PC-3 (cell line): ENCODE measurements at regions of chr6 and their contacts with region 1.

Region 1: DNA sequence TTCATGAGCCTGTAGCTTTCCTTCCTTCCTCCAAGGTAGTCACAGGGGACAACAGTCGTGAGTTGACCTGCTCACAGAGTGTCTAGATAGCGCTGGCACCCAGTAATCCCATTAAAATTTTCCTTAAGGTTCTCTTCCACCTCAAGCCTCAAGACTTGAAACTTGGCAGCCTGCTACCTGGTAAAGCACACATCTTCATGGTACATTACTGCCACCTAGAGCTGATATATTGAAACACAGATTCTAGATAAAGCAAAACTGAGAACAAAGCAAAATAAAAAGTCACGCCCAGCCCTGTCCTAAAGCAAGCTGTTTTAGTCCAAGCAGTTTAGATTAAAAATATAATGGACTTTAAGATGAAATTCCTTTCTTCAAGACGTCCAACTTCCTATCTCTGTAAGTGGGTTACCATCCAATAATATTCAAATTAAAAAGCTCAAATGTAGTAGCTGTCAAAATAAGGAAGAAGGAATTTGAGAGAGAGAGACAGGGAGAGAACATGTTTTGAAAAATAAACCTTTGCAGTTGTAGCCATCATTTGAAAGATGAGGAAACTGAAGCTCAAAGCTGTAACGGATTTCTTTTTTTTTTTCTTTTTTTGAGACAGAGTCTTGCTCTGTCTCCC is 50.7 kb upstream of the CD83 start:
- DNase-seq: peak; percentile 89
- ATAC-seq: peak; percentile 62
- H3K4me3 ChIP-seq: no peak overlapping the region
- H3K27ac ChIP-seq: no peak overlapping the region
- H3K4me1 ChIP-seq: peaks cover 24% of the 10 kb centered on the region
- H3K27me3 ChIP-seq: no peaks in the 10 kb centered on the region
- CTCF ChIP-seq: peak; percentile 84

Region 2: GRCh38 chr6:13725570-13725969 is 341.3 kb before region 1 on chr6:
- CTCF ChIA-PET with region 1: no interaction called
- POLR2A ChIA-PET with region 1: interaction called, 3 read pairs
- intact Hi-C with region 1: loop called (anchors 10 kb)
- DNase-seq: peak; percentile 99
- ATAC-seq: peak; percentile 57
- H3K4me3 ChIP-seq: peak overlapping the region; percentile 16; the same call in 1 of the 2 replicates
- H3K27ac ChIP-seq: peak overlapping the region; percentile 90
- H3K4me1 ChIP-seq: peaks cover 71% of the 10 kb centered on the region
- H3K27me3 ChIP-seq: no peaks in the 10 kb centered on the region
- CTCF ChIP-seq: no peak

Region 3: GRCh38 chr6:13814176-13814937 is 252.5 kb before region 1 on chr6 and contains the start of gene MCUR1:
- CTCF ChIA-PET with region 1: no interaction called
- POLR2A ChIA-PET with region 1: no interaction called
- intact Hi-C with region 1: loop called (anchors 5 kb)
- DNase-seq: peak; percentile 89
- ATAC-seq: peak; percentile 76
- H3K4me3 ChIP-seq: peak within 1 kb of the TSS; percentile 86
- H3K27ac ChIP-seq: peak within 1 kb of the TSS; percentile 44
- H3K4me1 ChIP-seq: peaks cover 18% of the 10 kb centered on the region
- H3K27me3 ChIP-seq: no peaks in the 10 kb centered on the region
- CTCF ChIP-seq: peak; percentile 22; the same call in 1 of the 2 replicates
- total RNA-seq, gene MCUR1: 28.6 and 36.2 TPM in 2 replicates

Region 4: DNA sequence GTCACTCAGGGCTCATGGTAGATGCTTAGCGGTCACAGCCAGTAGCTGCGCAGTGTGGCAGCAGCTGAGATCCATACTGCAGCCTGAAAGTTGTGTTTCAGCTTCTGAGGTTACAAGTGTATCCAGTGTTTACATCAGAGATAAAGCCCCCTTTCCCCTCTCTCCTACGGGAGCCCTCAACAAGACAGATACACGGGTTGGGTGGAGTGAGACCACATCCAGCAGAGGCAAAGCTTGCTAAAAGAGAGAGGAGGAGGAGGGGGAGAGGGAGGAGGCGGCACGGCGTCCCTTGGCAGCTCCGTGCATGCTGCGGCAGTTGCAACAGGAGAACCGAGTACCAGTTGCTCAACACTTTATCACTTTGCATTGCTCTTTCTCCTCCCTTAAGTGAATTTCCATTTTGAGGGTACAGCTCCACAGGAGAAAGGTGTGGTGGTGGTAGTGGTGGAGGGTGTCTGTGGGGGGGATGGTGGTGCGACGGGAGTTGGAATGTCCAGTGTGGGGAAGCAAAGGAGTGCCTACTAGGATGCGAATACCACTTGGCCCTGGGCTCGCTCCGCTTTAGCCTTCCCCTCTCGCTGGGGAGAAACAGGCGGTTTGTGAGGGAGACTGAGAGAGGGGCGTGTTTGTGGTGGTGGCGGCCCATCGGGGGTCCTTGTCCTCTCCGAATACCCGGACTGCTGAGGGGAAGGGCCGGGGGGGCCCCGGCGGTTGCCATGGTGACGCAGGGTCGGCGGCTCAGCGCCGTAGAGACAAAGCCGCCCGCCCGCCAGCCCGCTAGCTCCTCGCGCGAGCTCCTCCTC is 142.5 kb before region 1 on chr6:
- CTCF ChIA-PET with region 1: interaction called, 4 read pairs
- POLR2A ChIA-PET with region 1: interaction called, 10 read pairs
- intact Hi-C with region 1: no loop called
- DNase-seq: peak; percentile 45
- ATAC-seq: peak; percentile 65
- H3K4me3 ChIP-seq: peak overlapping the region; percentile 76
- H3K27ac ChIP-seq: peak overlapping the region; percentile 47
- H3K4me1 ChIP-seq: peaks cover 31% of the 10 kb centered on the region
- H3K27me3 ChIP-seq: no peaks in the 10 kb centered on the region
- CTCF ChIP-seq: no peak

Region 5: DNA sequence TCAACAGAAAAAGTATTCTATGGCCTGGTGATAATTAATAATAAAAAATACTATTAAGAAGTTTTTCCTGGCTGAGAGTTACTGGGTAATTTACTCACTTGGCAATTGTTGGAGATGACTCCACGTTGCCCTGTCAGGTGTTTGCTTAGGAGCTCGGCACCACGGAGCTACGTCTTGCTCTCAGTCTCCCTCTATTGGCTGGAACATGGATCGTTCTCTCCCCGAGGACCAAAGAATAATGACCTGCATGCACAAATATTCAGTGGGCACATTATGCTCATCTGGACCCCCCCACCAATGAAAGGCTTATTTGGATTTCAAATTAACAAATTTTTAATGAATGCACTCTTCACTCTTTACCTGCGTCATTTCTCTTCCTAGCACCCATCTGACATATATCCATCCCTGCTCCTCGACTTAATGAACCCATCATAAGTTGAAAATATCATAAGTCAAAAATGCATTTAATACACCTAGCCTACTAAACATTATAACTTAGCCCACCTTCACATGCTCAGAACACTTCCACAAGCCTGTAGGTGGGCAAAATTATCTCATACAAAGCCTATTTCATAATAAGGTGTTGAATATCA is 20.3 kb before region 1 on chr6:
- CTCF ChIA-PET with region 1: interaction called, 8 read pairs
- POLR2A ChIA-PET with region 1: no interaction called
- intact Hi-C with region 1: loop called (anchors 2 kb)
- DNase-seq: peak; percentile 87
- ATAC-seq: peak; percentile 94
- H3K4me3 ChIP-seq: no peak overlapping the region
- H3K27ac ChIP-seq: no peak overlapping the region
- H3K4me1 ChIP-seq: no peaks in the 10 kb centered on the region; the same call in 1 of the 2 replicates
- H3K27me3 ChIP-seq: no peaks in the 10 kb centered on the region
- CTCF ChIP-seq: peak; percentile 82

Region 6: GRCh38 chr6:14144678-14145113 is 77.8 kb after region 1 on chr6:
- CTCF ChIA-PET with region 1: no interaction called
- POLR2A ChIA-PET with region 1: no interaction called
- intact Hi-C with region 1: loop called (anchors 5 kb)
- DNase-seq: peak; percentile 77
- ATAC-seq: peak; percentile 98
- H3K4me3 ChIP-seq: no peak overlapping the region
- H3K27ac ChIP-seq: no peak overlapping the region
- H3K4me1 ChIP-seq: no peaks in the 10 kb centered on the region
- H3K27me3 ChIP-seq: no peaks in the 10 kb centered on the region
- CTCF ChIP-seq: peak; percentile 95